ENCODE measurements at regions of chr10 and their contacts with region 1.

Region 1: DNA sequence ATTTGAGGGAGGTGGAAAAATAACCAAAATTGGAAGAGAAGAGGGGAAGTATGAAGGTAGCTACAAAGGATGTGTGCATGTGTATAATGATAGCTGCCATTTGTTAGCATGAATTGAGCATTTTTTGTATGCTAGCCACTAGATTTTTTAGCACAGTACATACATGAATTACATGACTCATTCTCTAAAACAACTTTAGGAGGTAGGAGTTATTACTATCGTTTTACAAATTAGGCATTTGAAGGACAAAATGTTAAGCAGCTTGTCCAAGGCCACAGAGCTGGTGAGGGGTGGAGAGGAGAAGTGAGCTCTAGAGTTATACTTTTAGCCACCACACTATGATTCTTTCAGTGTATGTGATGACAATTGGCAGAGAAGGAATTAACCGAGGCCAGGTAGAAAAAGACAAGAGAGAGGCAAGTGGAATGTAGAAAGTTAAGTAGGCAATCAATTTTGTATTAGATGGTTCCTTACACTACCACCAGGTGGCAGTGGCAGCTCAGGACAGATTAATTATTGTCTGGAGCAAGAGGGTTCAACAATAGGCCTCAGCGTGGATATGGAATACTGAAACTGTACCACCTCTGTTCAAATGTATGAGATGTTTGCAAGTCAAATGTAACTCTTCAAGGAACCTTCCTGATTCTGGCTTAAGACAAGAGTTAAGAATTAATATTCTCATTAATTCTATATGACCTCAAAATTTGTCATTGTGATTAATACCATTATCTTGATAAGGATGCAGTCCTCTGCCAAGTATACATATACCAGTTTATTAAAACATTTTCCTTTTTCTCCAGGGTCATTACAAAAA is 128.0 kb downstream of the MBL2 start:
- DNase-seq: peak; percentile 45 to 70 (median 63)
- H3K4me3 ChIP-seq: no peak overlapping the region
- H3K27ac ChIP-seq: no peak overlapping the region
- H3K4me1 ChIP-seq: peaks cover 0 to 7% (median 3%) of the 10 kb centered on the region in 4 experiments
- H3K27me3 ChIP-seq: peaks cover 0 to 5% (median 0%) of the 10 kb centered on the region in 5 experiments

Region 2: GRCh38 chr10:52621635-52622079 is 22.9 kb before region 1 on chr10:
- CTCF ChIA-PET with region 1: no interaction called
- POLR2A ChIA-PET with region 1: no interaction called
- DNase-seq: no peak
- H3K4me3 ChIP-seq: no peak overlapping the region
- H3K27ac ChIP-seq: no peak overlapping the region
- H3K4me1 ChIP-seq: peaks cover 0 to 4% (median 0%) of the 10 kb centered on the region in 4 experiments
- H3K27me3 ChIP-seq: no peaks in the 10 kb centered on the region

Region 3: GRCh38 chr10:52632591-52632990 is 12.0 kb before region 1 on chr10:
- CTCF ChIA-PET with region 1: interaction called, 10 read pairs
- POLR2A ChIA-PET with region 1: no interaction called
- DNase-seq: peak in 1 of 3 donors; percentile 4
- H3K4me3 ChIP-seq: no peak overlapping the region
- H3K27ac ChIP-seq: no peak overlapping the region
- H3K4me1 ChIP-seq: peaks cover 0 to 15% (median 6%) of the 10 kb centered on the region in 4 experiments
- H3K27me3 ChIP-seq: no peaks in the 10 kb centered on the region

Region 4: GRCh38 chr10:52729271-52730104 is 84.9 kb after region 1 on chr10:
- CTCF ChIA-PET with region 1: interaction called, 14 read pairs
- POLR2A ChIA-PET with region 1: no interaction called
- DNase-seq: peak; percentile 31 to 46 (median 46)
- H3K4me3 ChIP-seq: no peak overlapping the region
- H3K27ac ChIP-seq: no peak overlapping the region
- H3K4me1 ChIP-seq: no peaks in the 10 kb centered on the region
- H3K27me3 ChIP-seq: no peaks in the 10 kb centered on the region

Region 5: GRCh38 chr10:52740913-52741675 is 96.5 kb after region 1 on chr10:
- CTCF ChIA-PET with region 1: interaction called, 11 read pairs
- POLR2A ChIA-PET with region 1: no interaction called
- DNase-seq: peak; percentile 68 to 84 (median 78)
- H3K4me3 ChIP-seq: no peak overlapping the region
- H3K27ac ChIP-seq: no peak overlapping the region
- H3K4me1 ChIP-seq: peaks cover 0 to 19% (median 7%) of the 10 kb centered on the region in 4 experiments
- H3K27me3 ChIP-seq: no peaks in the 10 kb centered on the region

Region 6: DNA sequence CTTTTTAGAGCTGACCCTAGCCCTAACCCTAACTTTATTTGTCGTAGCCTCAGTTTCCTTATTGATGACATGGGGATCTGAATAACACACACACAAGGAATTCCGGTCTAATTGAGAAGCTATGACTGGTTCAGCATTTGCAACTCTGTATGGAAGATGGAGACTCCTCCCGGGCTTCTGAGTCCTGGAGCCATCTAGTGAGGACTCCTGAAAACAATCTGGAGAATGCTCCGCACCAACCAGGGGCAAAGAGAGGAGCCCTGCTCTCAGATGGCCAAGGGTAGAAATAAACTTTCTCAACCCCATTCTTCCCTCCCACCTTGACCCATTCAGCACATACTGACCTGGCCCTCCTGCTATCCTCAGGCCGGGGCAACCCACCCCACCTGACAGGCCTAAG is 101.6 kb after region 1 on chr10:
- CTCF ChIA-PET with region 1: interaction called, 16 read pairs
- POLR2A ChIA-PET with region 1: no interaction called
- DNase-seq: no peak
- H3K4me3 ChIP-seq: no peak overlapping the region
- H3K27ac ChIP-seq: no peak overlapping the region
- H3K4me1 ChIP-seq: peaks cover 0 to 42% (median 20%) of the 10 kb centered on the region in 4 experiments
- H3K27me3 ChIP-seq: no peaks in the 10 kb centered on the region

Region 7: GRCh38 chr10:52769966-52770365 is 125.4 kb after region 1 on chr10:
- CTCF ChIA-PET with region 1: no interaction called
- POLR2A ChIA-PET with region 1: no interaction called
- DNase-seq: no peak
- H3K4me3 ChIP-seq: no peak overlapping the region
- H3K27ac ChIP-seq: no peak overlapping the region
- H3K4me1 ChIP-seq: peaks cover 0 to 10% (median 5%) of the 10 kb centered on the region in 4 experiments
- H3K27me3 ChIP-seq: no peaks in the 10 kb centered on the region